Right ventricle myocardium inferior (tissue), 1 donor: ENCODE measurements at regions of chr6 and their contacts with region 1.

Region 1: GRCh38 chr6:14711056-14711703 is 534.7 kb upstream of the JARID2 start:
- DNase-seq: no peak
- ATAC-seq: no peak

Region 2: GRCh38 chr6:14129575-14129974 is 581.6 kb before region 1 on chr6:
- intact Hi-C with region 1: no loop called
- DNase-seq: no peak
- ATAC-seq: peak; percentile 94

Region 3: DNA sequence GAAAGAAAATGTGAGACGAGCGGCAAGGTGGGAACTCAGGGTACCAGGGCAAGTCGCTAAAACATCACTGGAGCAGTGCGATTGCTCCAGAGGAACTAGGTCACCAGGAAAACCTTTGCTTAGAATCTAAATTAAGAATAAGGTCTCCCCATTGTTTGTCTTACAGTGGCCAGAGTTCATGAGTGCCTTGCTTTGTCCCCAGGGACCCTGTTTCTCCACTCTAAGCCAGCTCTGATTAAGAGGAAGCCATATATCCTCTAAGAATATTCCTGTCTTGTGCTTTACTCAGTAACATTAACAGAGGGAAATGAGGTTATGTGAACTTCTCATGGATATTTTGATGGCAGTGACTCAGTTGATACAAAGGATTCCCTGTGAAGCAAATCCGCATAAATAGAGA is 287.9 kb before region 1 on chr6:
- intact Hi-C with region 1: loop called (anchors 5 kb)
- DNase-seq: no peak
- ATAC-seq: peak; percentile 71

Region 4: GRCh38 chr6:14638906-14639761 is 72.0 kb before region 1 on chr6:
- intact Hi-C with region 1: loop called (anchors 5 kb)
- DNase-seq: peak; percentile 61
- ATAC-seq: peak; percentile 88